ENCODE measurements at regions of chr9 and their contacts with region 1.

Region 1: DNA sequence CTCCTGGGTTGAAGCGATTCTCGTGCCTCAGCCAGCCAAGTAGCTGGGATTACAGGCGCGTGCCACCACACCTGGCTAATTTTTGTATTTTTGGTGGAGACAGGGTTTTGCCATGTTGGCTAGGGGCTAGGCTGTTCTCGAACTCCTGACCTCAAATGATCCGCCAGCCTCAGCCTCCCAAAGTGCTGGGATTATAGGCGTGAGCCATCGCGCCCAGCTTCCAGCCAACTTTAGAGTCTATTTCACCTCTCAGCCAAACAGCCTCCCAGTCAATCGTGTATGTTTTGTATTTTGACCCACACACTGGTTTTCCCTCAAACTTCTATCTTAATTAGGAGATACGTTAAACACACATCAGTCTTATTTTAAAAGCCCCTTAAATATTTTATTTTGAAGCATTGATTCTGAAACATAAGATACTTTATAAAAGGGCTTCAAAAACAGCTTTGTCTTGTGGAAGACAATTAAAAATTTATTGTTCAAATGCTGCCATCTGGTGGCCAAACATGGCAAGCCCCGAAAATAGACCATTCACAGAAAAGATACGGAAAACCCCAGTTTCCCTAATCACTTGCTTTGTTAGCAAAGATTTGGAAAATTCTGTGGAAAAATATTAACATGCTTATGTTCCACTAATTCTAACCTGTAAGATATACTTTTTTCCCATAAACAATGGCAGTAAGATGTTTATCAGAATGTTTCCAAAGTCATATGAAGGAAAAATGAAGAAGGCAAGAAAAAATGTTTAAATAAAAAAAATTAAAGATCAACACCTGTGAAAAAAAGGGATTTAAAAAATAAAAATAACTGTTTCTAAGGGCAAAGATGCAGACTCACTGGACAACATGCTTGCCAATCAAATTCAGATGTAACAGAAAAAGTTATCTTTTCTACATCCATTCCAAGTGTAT is 33.1 kb downstream of the APTX start:
- DNase-seq: peak; percentile 56 to 64
- H3K4me3 ChIP-seq: no peak overlapping the region
- H3K27ac ChIP-seq: no peak overlapping the region
- H3K4me1 ChIP-seq: no peaks in the 10 kb centered on the region
- H3K27me3 ChIP-seq: no peaks in the 10 kb centered on the region
- CTCF ChIP-seq: peak; percentile 47 to 72 (median 69)
- POLR2A ChIP-seq: no peak

Region 2: DNA sequence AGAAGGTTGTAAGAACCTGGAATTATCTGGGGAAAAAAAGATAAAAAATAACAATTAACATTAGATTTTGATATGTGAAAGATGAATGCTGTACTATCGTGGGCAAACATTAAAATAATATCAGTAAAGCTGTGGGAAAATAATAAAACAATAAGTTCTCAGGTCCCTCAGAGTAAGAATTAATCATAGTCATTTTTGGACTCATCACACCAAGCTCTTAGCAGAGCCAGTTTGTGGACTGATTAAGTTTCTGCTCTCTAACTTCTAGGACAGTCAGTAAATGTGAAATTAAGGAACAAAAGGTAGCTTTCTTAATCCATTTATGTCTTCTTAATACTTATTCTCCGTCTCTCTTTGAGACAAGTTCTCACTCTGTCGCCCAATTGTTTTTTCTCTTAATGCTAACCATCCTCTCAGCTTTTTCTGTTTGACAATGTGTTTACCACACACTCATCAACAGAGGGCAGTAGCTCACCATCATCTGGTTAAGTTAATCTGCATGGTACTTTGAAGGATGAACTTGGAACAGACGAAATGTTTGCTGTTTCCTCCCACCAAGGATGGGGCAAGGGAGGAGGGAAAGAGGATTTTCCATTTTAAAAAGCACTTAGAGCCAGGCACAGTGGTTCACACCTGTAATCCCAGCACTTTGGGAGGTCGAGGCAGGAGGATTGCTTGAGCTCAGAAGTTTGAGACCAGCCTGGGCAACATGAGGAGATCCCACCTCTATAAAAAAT is 589.2 kb before region 1 on chr9:
- intact Hi-C with region 1: loop called (anchors 5 kb)
- DNase-seq: peak in 1 of 2 donors; percentile 30
- H3K4me3 ChIP-seq: no peak overlapping the region
- H3K27ac ChIP-seq: no peak overlapping the region
- H3K4me1 ChIP-seq: no peaks in the 10 kb centered on the region
- H3K27me3 ChIP-seq: no peaks in the 10 kb centered on the region
- CTCF ChIP-seq: peak in 4 of 6 experiments; percentile 71 to 96 (median 90)
- POLR2A ChIP-seq: no peak

Region 3: DNA sequence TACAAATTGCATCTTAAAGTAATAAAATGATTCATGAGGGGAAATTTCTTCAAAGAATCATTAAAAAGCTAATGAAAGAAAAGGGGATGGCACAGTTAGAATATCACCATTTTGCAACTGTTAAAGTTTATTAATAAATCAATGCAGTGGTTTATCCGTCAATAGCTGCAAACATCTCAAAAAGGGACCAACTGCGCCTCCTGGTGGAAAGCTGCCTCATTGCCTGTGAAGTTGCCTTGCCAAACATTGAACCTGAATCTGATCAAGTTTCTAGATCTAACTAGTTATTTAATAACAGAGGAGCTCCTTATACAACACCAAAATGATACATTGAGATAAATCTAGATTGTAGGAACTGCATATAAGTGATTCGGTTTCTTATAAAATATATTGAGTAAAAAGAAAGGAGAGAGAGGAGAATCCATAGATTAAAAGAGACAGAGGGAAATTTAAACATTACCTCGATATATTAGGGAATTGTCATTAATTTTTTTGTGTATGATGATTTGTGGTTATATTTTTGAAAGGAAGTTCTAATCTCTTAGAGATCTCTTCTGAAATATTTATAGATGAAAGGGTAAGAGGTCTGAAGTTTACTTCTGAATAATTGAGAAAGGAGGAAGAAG is 388.5 kb before region 1 on chr9:
- intact Hi-C with region 1: loop called (anchors 5 kb)
- DNase-seq: peak; percentile 62 to 69
- H3K4me3 ChIP-seq: no peak overlapping the region
- H3K27ac ChIP-seq: no peak overlapping the region
- H3K4me1 ChIP-seq: no peaks in the 10 kb centered on the region
- H3K27me3 ChIP-seq: no peaks in the 10 kb centered on the region
- CTCF ChIP-seq: peak; percentile 39 to 86 (median 76)
- POLR2A ChIP-seq: no peak

Region 4: GRCh38 chr9:32755730-32756129 is 212.6 kb before region 1 on chr9:
- intact Hi-C with region 1: no loop called
- DNase-seq: no peak
- H3K4me3 ChIP-seq: no peak overlapping the region
- H3K27ac ChIP-seq: no peak overlapping the region
- H3K4me1 ChIP-seq: no peaks in the 10 kb centered on the region
- H3K27me3 ChIP-seq: no peaks in the 10 kb centered on the region
- CTCF ChIP-seq: no peak
- POLR2A ChIP-seq: no peak

Region 5: GRCh38 chr9:32801530-32801929 is 166.8 kb before region 1 on chr9:
- intact Hi-C with region 1: no loop called
- DNase-seq: no peak
- H3K4me3 ChIP-seq: no peak overlapping the region
- H3K27ac ChIP-seq: no peak overlapping the region
- H3K4me1 ChIP-seq: no peaks in the 10 kb centered on the region
- H3K27me3 ChIP-seq: no peaks in the 10 kb centered on the region
- CTCF ChIP-seq: no peak
- POLR2A ChIP-seq: no peak

Region 6: DNA sequence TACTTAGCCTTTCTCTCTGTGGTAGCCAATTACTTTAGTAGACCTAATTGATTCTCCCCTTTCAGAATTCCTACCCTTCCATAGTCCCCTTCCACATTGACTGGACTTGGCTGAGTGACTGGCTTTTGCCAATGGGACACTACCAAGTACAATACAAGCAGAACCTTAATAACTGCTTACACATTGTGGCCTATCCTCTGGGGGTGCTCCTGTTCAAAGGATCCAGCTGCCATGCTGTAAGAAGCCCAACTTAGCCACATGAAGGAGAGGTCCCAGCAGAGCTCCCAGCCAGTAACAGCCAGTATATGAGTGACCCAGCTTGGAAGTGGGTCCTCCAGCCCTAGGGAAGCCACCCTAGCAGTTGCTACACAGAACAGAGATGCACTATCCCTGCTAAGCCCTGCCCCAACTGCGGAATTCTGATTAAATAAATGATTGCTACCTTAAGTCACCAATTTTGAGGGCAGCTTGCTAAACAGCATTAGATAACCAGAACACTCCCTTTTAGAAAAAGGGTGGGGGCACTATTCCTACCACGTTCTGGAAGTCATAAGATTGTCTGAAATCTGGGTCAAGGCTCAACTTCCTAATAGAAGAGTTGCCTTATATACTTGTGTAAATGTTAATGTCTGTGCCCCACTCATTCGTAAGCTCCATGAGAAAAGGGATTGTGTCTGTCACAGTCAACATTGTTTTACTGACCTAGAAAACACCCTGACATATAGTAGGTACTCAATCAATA is 44.1 kb after region 1 on chr9:
- intact Hi-C with region 1: no loop called
- DNase-seq: no peak
- H3K4me3 ChIP-seq: no peak overlapping the region
- H3K27ac ChIP-seq: no peak overlapping the region
- H3K4me1 ChIP-seq: no peaks in the 10 kb centered on the region
- H3K27me3 ChIP-seq: no peaks in the 10 kb centered on the region
- CTCF ChIP-seq: no peak
- POLR2A ChIP-seq: no peak

Region 7: DNA sequence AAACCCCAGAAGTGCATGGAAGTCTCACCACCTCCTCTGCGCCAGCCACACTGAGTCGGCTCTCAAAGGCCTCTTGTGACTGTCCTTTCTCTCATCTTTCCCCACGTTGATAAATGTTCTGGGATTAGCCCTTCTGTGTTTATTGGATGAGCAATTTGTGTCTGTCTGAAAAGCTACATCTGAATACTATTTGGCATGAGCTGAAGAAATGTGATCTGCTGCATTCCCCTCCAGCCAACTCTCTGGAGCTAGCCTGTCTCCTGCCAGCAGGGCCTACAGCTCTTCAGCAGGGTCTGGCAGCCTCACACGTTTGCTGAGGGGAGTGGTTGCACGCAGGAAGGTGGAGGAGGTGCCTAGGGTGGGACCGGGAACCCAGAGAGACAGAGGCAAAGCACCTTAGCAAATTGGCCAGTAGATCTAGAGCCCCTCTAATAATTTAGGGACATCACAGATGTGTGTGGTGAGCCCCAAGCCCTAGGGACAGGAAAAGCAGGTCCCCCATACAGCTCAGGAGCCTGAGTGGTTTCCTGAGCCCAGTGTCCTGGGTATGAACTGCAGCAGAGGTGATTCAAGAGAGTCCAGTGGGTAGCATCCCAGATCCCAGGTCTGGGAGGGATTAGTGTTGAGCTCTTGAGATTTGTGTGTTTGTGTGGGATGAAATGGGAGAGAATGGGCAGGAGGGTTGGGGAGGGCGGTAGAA is 219.3 kb after region 1 on chr9:
- intact Hi-C with region 1: no loop called
- DNase-seq: peak; percentile 53 to 70
- H3K4me3 ChIP-seq: no peak overlapping the region
- H3K27ac ChIP-seq: peak overlapping the region in 1 of 3 donors; percentile 45
- H3K4me1 ChIP-seq: peaks cover 25 to 27% of the 10 kb centered on the region in 2 donors
- H3K27me3 ChIP-seq: no peaks in the 10 kb centered on the region
- CTCF ChIP-seq: no peak
- POLR2A ChIP-seq: no peak